CD8-positive, alpha-beta memory T cell (primary cell): ENCODE measurements at regions of chr11 and their contacts with region 1.

Region 1: GRCh38 chr11:67656278-67656922 is 5.9 kb upstream of the ACY3 start:
- DNase-seq: no peak
- H3K4me3 ChIP-seq: no peak overlapping the region
- H3K4me3 Mint-ChIP-seq: peak overlapping the region in 1 of 7 donors; percentile 23
- H3K27ac ChIP-seq: no peak overlapping the region
- H3K27ac Mint-ChIP-seq: peak overlapping the region in 1 of 8 donors; percentile 50
- H3K4me1 ChIP-seq: no peaks in the 10 kb centered on the region
- H3K4me1 Mint-ChIP-seq: peaks cover 0 to 12% (median 7%) of the 10 kb centered on the region in 3 donors
- H3K27me3 ChIP-seq: no peaks in the 10 kb centered on the region
- H3K27me3 Mint-ChIP-seq: no peaks in the 10 kb centered on the region

Region 2: GRCh38 chr11:66800720-66801428 is 855.5 kb before region 1 on chr11:
- CTCF ChIA-PET with region 1: no interaction called
- POLR2A ChIA-PET with region 1: no interaction called
- DNase-seq: no peak
- H3K4me3 ChIP-seq: no peak overlapping the region
- H3K4me3 Mint-ChIP-seq: no peak overlapping the region
- H3K27ac ChIP-seq: no peak overlapping the region
- H3K27ac Mint-ChIP-seq: peak overlapping the region in 1 of 8 donors; percentile 50
- H3K4me1 ChIP-seq: no peaks in the 10 kb centered on the region
- H3K4me1 Mint-ChIP-seq: no peaks in the 10 kb centered on the region
- H3K27me3 ChIP-seq: no peaks in the 10 kb centered on the region
- H3K27me3 Mint-ChIP-seq: no peaks in the 10 kb centered on the region

Region 3: DNA sequence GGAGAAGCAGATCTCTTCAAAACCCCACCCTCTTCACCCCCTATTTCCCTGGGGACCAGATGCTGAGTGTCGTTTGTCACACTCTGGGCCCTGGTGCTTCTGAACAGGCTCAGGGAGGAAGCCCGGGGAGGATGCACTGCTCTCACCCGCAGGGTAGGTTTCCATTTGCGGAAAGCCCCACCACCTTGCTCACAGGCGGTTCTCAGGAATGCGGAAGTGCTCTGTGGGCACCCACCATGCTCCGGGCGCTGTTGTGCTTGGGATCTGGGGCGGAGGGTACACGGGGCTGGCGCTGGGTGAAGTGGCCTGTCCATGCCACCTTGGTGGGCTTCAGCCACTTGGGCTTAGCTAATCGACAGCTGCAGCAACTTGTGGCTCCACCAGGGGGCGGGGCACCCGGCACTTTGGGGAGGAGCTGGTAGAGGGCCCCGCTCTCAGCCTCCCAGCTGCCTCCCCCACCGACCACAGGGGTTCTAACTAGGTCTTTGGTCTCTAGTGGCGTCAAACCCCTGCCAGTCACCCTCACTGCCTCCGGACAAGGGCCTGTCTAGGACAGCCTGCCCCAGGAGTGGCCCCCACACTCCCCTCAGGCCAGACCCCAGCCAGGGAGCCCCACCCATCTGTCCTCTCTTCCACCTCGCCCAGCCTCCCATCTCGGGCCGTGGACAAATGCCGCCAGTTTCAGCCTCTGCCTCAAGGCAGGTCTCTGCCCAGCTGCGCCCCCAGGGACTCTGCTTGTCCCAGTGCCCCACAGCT is 42.3 kb before region 1 on chr11:
- CTCF ChIA-PET with region 1: interaction called, 12 read pairs
- POLR2A ChIA-PET with region 1: no interaction called
- DNase-seq: peak; percentile 80 to 89 (median 85)
- H3K4me3 ChIP-seq: peak overlapping the region; percentile 50
- H3K4me3 Mint-ChIP-seq: peak overlapping the region; percentile 82 to 89 (median 85)
- H3K27ac ChIP-seq: peak overlapping the region; percentile 86
- H3K27ac Mint-ChIP-seq: peak overlapping the region; percentile 94 to 99 (median 98)
- H3K4me1 ChIP-seq: peaks cover 33% of the 10 kb centered on the region
- H3K4me1 Mint-ChIP-seq: peaks cover 31 to 45% (median 32%) of the 10 kb centered on the region in 3 donors
- H3K27me3 ChIP-seq: no peaks in the 10 kb centered on the region
- H3K27me3 Mint-ChIP-seq: no peaks in the 10 kb centered on the region